Activated CD4-positive, alpha-beta T cell treated with anti-CD3 and anti-CD28 coated beads, Interleukin-2, amount 10 ng/mL, durations not matched to agents 24 days and 14 days (primary cell): ENCODE measurements at regions of chr11 and their contacts with region 1.

Region 1: GRCh38 chr11:31509429-31510345 is at the starts of genes ELP4 and IMMP1L:
- DNase-seq: peak; percentile 99
- H3K4me3 Mint-ChIP-seq: peak within 1 kb of the TSS; percentile 96
- H3K27ac Mint-ChIP-seq: peak within 1 kb of the TSS; percentile 91
- H3K4me1 Mint-ChIP-seq: peaks cover 25% of the 10 kb centered on the region
- H3K27me3 Mint-ChIP-seq: no peaks in the 10 kb centered on the region
- total RNA-seq, gene ELP4: 17.4 and 20.6 TPM in 2 replicates
- total RNA-seq, gene IMMP1L: 24.0 and 27.2 TPM in 2 replicates

Region 2: DNA sequence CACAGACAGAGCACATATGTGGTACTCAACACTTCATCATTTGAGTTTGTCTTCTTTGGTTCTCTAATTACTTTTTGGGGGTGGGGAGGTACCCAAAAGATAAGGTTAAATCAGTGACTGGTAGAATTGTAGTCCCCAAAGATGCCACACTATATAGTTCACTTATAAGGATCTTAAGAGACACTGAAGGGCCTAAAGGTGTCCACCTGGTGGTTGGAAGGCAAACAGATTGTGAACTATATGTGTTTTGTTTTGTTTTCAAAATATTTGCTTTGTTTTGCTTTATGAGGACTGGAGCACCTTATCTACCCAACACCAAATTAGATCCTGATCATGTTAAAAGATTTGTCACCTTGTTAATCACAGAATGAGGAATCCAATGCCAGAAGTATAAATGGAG is 276.3 kb before region 1 on chr11:
- intact Hi-C with region 1: no loop called
- DNase-seq: no peak
- H3K4me3 Mint-ChIP-seq: no peak overlapping the region
- H3K27ac Mint-ChIP-seq: no peak overlapping the region
- H3K4me1 Mint-ChIP-seq: no peaks in the 10 kb centered on the region
- H3K27me3 Mint-ChIP-seq: peaks cover 3% of the 10 kb centered on the region

Region 3: DNA sequence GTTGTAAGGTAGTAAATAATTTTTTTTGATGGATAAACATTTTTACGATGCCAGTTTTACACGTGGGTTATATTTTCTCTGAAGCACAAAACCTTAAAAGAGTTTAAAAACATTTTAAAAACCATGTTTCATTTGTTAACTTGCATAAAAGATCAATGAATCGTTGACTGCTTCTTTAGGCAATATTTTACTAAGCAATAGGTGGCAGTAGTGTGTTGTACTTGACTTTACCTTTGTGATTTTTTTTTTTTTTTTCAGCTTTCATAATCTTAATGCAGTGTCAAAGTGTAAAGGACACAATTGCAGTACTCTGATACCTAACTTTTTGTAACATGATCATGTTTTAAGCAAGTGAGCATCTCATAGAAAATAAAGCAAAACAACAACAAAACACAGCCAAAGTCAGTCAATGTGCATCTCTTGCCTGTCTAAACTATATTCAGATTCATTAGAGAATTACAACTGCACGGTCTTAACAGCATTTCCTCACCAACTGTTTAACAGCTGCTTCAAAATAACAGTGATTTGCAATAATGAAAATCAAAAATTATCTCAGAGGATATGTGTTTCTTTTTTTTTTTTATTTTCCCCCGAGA is 112.3 kb before region 1 on chr11:
- intact Hi-C with region 1: loop called (anchors 1 kb)
- DNase-seq: no peak
- H3K4me3 Mint-ChIP-seq: no peak overlapping the region
- H3K27ac Mint-ChIP-seq: no peak overlapping the region
- H3K4me1 Mint-ChIP-seq: no peaks in the 10 kb centered on the region
- H3K27me3 Mint-ChIP-seq: no peaks in the 10 kb centered on the region

Region 4: DNA sequence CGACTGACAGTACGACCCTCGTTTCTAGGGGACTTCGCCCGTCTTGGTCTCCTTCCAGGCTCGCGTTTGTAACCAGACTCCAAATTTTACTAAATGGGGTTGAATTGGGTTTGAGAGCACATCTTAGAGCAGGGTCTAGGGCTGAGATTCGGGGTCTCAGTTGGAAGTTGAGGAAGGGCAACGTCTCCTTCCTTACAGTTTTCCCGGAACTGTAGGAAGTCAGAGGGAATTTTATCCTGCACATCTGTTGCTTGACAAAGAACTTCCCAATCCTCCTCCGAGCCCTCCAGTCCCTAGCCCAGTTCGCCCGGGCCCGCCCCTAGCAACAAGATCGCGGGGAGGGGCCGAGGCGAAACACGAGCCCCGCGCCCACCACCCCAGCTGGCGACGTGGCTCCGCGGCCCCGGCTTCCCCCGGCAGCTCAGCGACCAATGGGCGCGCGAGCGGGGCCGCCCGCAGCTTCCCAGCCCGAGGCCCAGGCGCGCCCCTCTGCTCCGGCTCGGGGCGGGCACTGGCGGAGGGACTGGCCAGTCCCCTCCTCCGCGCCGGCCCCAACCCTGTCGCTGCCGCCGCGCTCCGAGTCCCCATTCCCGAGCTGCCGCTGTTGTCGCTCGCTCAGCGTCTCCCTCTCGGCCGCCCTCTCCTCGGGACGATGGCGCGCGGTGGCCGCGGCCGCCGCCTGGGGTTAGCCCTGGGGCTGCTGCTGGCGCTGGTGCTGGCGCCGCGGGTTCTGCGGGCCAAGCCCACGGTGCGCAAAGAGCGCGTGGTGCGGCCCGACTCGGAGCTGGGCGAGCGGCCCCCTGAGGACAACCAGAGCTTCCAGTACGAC is 581.1 kb after region 1 on chr11 and contains the start of gene RCN1:
- intact Hi-C with region 1: loop called (anchors 10 kb)
- DNase-seq: peak; percentile 84
- H3K4me3 Mint-ChIP-seq: peak within 1 kb of the TSS; percentile 85
- H3K27ac Mint-ChIP-seq: peak within 1 kb of the TSS; percentile 92
- H3K4me1 Mint-ChIP-seq: peaks cover 35% of the 10 kb centered on the region
- H3K27me3 Mint-ChIP-seq: peaks cover 13% of the 10 kb centered on the region
- total RNA-seq, gene RCN1: 30.5 and 30.6 TPM in 2 replicates